Sigmoid colon (tissue), 7 donors: ENCODE measurements at regions of chr17 and their contacts with region 1.

Region 1: GRCh38 chr17:836151-836550 is 54.0 kb downstream of the MRM3 start:
- DNase-seq: no peak
- H3K4me3 ChIP-seq: no peak overlapping the region
- H3K27ac ChIP-seq: peak overlapping the region; percentile 70 to 83 (median 80)
- H3K4me1 ChIP-seq: peaks cover 0 to 43% (median 23%) of the 10 kb centered on the region in 4 donors
- H3K27me3 ChIP-seq: no peaks in the 10 kb centered on the region
- CTCF ChIP-seq: no peak
- EP300 ChIP-seq: no peak
- POLR2A ChIP-seq: no peak

Region 2: GRCh38 chr17:862582-862981 is 26.4 kb after region 1 on chr17:
- intact Hi-C with region 1: loop called (anchors 1 kb)
- DNase-seq: no peak
- H3K4me3 ChIP-seq: no peak overlapping the region
- H3K27ac ChIP-seq: peak overlapping the region in 3 of 4 donors; percentile 73 to 81 (median 75)
- H3K4me1 ChIP-seq: peaks cover 0 to 92% (median 77%) of the 10 kb centered on the region in 4 donors
- H3K27me3 ChIP-seq: no peaks in the 10 kb centered on the region
- CTCF ChIP-seq: no peak
- EP300 ChIP-seq: peak in 1 of 4 donors; percentile 43
- POLR2A ChIP-seq: no peak